CD8-positive, alpha-beta memory T cell (primary cell): ENCODE measurements at regions of chr9 and their contacts with region 1.

Region 1: GRCh38 chr9:128881901-128882681 is at the starts of genes KYAT1 and LRRC8A:
- DNase-seq: peak; percentile 96 to 98 (median 97)
- H3K4me3 ChIP-seq: peak within 1 kb of the TSS; percentile 98
- H3K4me3 Mint-ChIP-seq: peak within 1 kb of the TSS; percentile 93 to 99 (median 98)
- H3K27ac ChIP-seq: peak within 1 kb of the TSS; percentile 94
- H3K27ac Mint-ChIP-seq: peak within 1 kb of the TSS; percentile 80 to 98 (median 96)
- H3K4me1 ChIP-seq: peaks cover 39% of the 10 kb centered on the region
- H3K4me1 Mint-ChIP-seq: peaks cover 41 to 68% (median 51%) of the 10 kb centered on the region in 3 donors
- H3K27me3 ChIP-seq: no peaks in the 10 kb centered on the region
- H3K27me3 Mint-ChIP-seq: no peaks in the 10 kb centered on the region
- total RNA-seq, gene KYAT1: 8.9 to 10.4 TPM
- total RNA-seq, gene LRRC8A: 27.3 to 27.6 TPM

Region 2: GRCh38 chr9:128902351-128903078 is 20.4 kb after region 1 on chr9:
- CTCF ChIA-PET with region 1: interaction called, 28 read pairs
- POLR2A ChIA-PET with region 1: no interaction called
- DNase-seq: peak; percentile 71 to 93 (median 86)
- H3K4me3 ChIP-seq: peak overlapping the region; percentile 63
- H3K4me3 Mint-ChIP-seq: peak overlapping the region; percentile 72 to 87 (median 82)
- H3K27ac ChIP-seq: peak overlapping the region; percentile 73
- H3K27ac Mint-ChIP-seq: peak overlapping the region; percentile 91 to 99 (median 98)
- H3K4me1 ChIP-seq: peaks cover 67% of the 10 kb centered on the region
- H3K4me1 Mint-ChIP-seq: peaks cover 57 to 84% (median 60%) of the 10 kb centered on the region in 3 donors
- H3K27me3 ChIP-seq: no peaks in the 10 kb centered on the region
- H3K27me3 Mint-ChIP-seq: no peaks in the 10 kb centered on the region